ENCODE measurements at regions of chr1 and their contacts with region 1.

Region 1: DNA sequence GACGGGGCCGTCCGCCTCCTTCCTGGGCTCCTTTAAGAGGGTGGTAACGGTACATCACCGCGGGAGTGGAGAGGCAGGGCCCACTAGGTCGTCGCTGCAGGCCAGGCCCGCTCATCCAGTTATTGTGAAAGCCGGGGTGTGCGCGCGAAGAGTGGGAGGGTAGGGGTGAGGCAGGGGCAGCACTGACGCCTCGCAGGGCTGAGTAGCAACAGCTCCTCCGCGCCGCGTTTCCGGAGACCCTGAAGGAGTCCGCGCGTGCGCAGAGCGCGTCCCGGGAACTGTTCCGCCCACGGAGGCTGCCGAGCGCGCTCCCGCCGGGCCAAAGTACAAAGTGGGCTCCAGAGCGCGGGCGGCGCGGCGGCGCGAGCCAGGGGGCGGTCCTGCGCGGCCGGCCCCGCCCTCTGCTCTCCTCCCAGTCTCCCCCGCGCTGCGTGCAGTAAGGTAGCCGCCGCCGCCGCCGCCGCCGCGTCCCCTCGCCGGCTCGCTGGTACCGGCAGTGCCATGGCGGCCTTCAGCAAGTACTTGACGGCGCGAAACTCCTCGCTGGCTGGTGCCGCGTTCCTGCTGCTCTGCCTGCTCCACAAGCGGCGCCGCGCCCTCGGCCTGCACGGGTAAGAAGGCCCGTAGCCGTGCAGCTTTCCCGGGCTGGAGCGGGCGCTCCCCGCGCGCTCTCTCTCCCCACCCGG is at the start of gene ABCD3:
- DNase-seq: peak; percentile 98
- H3K4me3 Mint-ChIP-seq: no peak within 1 kb of the TSS
- H3K27ac Mint-ChIP-seq: peak within 1 kb of the TSS; percentile 55
- H3K4me1 Mint-ChIP-seq: peaks cover 35% of the 10 kb centered on the region
- H3K27me3 Mint-ChIP-seq: peaks cover 2% of the 10 kb centered on the region
- total RNA-seq, gene ABCD3: 33.7 to 34.0 TPM

Region 2: GRCh38 chr1:93909146-93910050 is 508.7 kb before region 1 on chr1 and contains the start of gene GCLM:
- CTCF ChIA-PET with region 1: no interaction called
- POLR2A ChIA-PET with region 1: no interaction called
- intact Hi-C with region 1: loop called (anchors 1 kb)
- DNase-seq: peak; percentile 92
- H3K4me3 Mint-ChIP-seq: peak within 1 kb of the TSS; percentile 91
- H3K27ac Mint-ChIP-seq: peak within 1 kb of the TSS; percentile 87
- H3K4me1 Mint-ChIP-seq: peaks cover 29% of the 10 kb centered on the region
- H3K27me3 Mint-ChIP-seq: no peaks in the 10 kb centered on the region
- total RNA-seq, gene GCLM: 21.7 to 26.5 TPM

Region 3: DNA sequence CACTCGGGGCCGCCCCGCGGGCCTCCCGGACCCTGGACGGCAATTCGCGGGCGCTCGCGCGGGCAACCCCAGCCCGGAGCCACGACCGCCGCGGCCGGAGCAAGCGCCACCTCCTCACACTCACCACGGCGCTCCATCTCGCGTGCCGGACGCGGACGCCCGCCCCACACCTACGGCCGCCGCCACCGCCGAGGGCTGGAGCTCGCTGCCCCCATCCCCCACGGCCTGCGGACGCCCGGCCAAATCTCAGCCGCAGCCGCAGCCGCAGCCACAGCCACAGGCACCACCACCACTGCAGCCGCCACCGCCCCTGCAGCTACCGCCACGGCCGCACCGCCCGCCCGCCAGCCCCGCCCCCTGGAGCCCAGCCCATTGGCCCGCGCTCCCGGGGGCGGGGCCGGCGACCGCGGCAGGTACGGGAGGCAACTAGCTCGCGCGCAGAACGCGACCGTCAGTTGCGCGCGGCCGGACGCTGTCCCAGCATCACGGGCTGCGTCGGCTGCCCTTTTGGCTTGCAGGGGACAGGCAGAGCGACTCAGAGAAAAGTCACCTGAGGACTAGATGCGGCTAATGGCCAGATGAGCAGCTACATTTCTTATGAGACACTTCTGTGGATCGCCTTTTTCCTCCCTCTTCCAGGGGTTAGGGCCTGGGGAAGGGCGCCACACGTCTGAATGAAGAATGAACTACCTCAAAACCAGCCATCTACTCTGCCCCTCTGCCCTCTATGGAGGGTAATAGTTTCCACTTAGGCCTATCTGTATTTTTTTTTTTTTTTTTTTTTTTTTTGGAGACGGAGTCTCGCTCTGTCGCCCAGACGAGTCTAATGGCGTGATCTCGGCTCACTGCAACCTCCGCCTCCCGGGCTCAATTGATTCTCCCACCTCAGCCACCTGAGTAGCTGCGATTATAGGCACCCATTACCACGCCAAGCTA is 180.6 kb before region 1 on chr1 and contains the start of gene ARHGAP29:
- CTCF ChIA-PET with region 1: no interaction called
- POLR2A ChIA-PET with region 1: no interaction called
- intact Hi-C with region 1: loop called (anchors 2 kb)
- DNase-seq: peak; percentile 69
- H3K4me3 Mint-ChIP-seq: peak within 1 kb of the TSS; percentile 44
- H3K27ac Mint-ChIP-seq: no peak within 1 kb of the TSS
- H3K4me1 Mint-ChIP-seq: peaks cover 12% of the 10 kb centered on the region
- H3K27me3 Mint-ChIP-seq: peaks cover 59% of the 10 kb centered on the region
- total RNA-seq, gene ARHGAP29: 0.31 to 0.38 TPM

Region 4: GRCh38 chr1:94383966-94384408 is 34.1 kb before region 1 on chr1:
- CTCF ChIA-PET with region 1: no interaction called
- POLR2A ChIA-PET with region 1: interaction called, 5 read pairs
- intact Hi-C with region 1: loop called (anchors 1 kb)
- DNase-seq: peak; percentile 16
- H3K4me3 Mint-ChIP-seq: no peak overlapping the region
- H3K27ac Mint-ChIP-seq: peak overlapping the region; percentile 29
- H3K4me1 Mint-ChIP-seq: peaks cover 21% of the 10 kb centered on the region
- H3K27me3 Mint-ChIP-seq: peaks cover 9% of the 10 kb centered on the region

Region 5: DNA sequence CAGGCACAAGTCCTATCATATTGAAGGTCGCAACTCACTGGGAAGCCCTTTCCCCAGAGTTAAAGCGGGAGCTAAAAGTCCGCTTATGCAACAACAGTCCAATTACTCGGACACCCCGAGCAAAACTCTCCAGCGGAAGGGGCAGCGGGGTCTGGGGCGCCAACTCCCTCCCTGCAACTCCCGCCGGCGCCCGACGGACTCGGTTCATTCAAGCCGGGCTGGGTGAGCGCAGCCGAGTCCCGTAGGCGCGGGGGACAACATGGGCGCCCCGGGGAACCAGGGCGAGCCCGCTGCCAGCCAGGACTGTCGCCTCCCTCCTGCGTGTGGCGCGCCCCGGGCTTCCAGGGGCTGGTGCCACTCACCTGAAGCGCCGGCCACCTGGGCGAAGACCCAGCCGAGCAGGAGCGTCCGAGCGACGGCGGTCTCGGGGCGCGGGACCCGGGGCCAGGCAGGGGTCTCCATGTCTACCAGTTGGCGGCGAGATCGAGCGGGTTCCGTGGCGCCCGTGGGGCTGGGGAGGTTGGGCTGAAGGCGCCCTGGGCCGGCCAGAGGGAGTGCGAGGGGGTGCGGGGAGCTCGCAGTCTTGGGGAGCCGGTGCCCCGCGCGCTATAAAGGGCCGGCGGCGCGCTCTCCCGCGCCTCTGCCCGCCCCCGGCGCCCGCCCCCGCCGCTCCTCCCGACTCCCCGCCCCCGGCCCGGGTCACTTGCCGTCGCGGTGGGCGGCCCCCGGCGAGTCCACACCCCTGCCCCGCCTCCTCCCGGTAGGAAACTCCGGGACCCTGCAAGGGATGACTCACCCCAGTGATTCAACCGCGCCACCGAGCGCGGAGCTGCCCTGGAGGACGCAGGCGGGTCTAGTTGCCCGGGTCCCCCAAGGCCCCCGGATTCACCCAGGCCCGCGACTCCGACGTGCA is 123.3 kb after region 1 on chr1 and contains the start of gene F3:
- CTCF ChIA-PET with region 1: no interaction called
- POLR2A ChIA-PET with region 1: no interaction called
- intact Hi-C with region 1: loop called (anchors 5 kb)
- DNase-seq: peak; percentile 87
- H3K4me3 Mint-ChIP-seq: peak within 1 kb of the TSS; percentile 75
- H3K27ac Mint-ChIP-seq: no peak within 1 kb of the TSS
- H3K4me1 Mint-ChIP-seq: peaks cover 12% of the 10 kb centered on the region
- H3K27me3 Mint-ChIP-seq: peaks cover 61% of the 10 kb centered on the region
- total RNA-seq, gene F3: 0.15 to 0.33 TPM

Region 6: GRCh38 chr1:95072532-95073419 is 654.7 kb after region 1 on chr1 and contains the start of gene ALG14:
- CTCF ChIA-PET with region 1: no interaction called
- POLR2A ChIA-PET with region 1: no interaction called
- intact Hi-C with region 1: loop called (anchors 1 kb)
- DNase-seq: peak; percentile 95
- H3K4me3 Mint-ChIP-seq: peak within 1 kb of the TSS; percentile 90
- H3K27ac Mint-ChIP-seq: peak within 1 kb of the TSS; percentile 92
- H3K4me1 Mint-ChIP-seq: peaks cover 14% of the 10 kb centered on the region
- H3K27me3 Mint-ChIP-seq: no peaks in the 10 kb centered on the region
- total RNA-seq, gene ALG14: 4.3 to 4.4 TPM